RWPE1 (cell line): ENCODE measurements at regions of chr18 and their contacts with region 1.

Region 1: DNA sequence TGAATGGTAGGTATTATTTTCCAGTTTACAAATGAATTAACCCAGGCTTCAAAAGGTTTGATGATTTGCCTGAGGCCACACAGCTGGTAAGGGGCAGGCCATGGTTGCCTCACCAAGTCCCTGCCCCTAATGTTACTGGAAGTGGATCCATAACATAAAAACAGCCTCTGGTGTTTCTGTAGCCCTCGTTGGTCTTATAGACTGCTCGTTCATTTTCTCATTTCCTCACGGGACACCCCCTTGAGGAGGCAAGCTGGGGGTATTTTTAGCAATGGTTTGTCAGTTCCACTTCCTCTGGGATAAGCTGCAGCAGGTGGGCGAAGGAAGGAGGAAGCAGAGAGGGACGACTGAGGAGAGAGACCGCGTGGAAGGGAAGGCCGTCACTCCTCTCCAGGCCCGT is 32.9 kb upstream of the NDUFV2 start:
- DNase-seq: no peak
- H3K27ac ChIP-seq: no peak overlapping the region
- CTCF ChIP-seq: no peak

Region 2: GRCh38 chr18:8835521-8835953 is 234.1 kb before region 1 on chr18:
- CTCF ChIA-PET with region 1: no interaction called
- POLR2A ChIA-PET with region 1: no interaction called
- DNase-seq: no peak
- H3K27ac ChIP-seq: peak overlapping the region; percentile 56
- CTCF ChIP-seq: no peak

Region 3: DNA sequence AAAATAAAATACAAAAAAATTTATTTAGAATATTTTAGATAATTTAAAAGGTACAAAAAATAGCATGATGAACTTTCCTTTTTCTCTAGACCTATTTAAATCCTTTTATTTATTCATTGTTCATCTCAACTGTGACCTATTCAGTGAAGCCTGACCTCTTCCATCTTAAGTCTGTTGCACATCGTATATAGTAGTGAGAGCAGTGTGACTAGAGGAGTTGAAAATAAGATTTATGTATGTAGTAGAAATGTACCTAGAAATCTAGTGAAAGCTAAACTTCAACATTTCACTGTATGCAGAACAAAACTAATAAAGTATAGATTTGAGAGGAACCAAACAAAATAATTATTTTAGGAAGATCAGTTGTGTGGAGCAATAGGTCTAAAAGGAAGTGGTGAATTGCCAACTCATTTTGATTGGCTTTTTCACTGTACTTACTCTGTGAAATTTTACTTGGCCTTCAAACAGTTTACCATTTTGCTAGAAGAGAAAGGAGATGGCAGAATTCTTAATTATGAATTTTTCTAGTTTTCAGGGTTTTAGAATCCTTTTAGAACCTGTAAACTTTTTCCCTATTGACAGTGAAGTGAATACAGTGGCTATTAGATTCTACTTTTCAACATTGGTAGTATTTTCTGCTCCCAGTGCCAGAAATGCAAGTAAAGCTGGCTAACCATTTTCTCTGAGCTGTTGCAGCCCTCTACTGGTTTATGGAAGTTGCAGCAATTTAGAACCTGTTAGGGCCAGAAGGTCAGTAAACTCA is 78.0 kb after region 1 on chr18:
- CTCF ChIA-PET with region 1: interaction called, 10 read pairs
- POLR2A ChIA-PET with region 1: no interaction called
- DNase-seq: peak; percentile 59
- H3K27ac ChIP-seq: no peak overlapping the region
- CTCF ChIP-seq: peak; percentile 85

Region 4: GRCh38 chr18:9494766-9495331 is 425.2 kb after region 1 on chr18:
- CTCF ChIA-PET with region 1: no interaction called
- POLR2A ChIA-PET with region 1: no interaction called
- DNase-seq: no peak
- H3K27ac ChIP-seq: no peak overlapping the region
- CTCF ChIP-seq: no peak